ENCODE measurements at regions of chr10 and their contacts with region 1.

Region 1: DNA sequence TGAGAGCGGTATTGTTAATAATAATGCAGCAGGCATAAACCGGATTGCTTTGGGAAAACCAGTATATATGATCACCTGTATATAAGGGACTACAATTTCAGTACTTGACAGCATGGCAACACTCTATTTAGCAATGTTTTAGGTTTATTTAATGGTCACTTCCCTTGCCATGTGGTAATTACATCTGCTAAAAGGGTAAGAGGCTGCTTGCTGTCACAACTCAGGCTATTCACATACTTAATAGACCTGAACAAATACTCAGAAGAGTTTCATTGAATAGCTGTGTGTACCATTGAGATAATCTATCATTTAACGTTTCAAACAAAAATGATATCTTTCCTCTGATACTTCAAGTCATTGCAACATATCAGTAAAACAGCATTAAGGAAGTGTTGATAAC is 90.1 kb downstream of the PCDH15 start:
- DNase-seq: peak in 1 of 2 experiments; percentile 22
- H3K4me3 ChIP-seq: no peak overlapping the region
- H3K4me3 Mint-ChIP-seq: no peak overlapping the region
- H3K27ac Mint-ChIP-seq: no peak overlapping the region
- H3K4me1 ChIP-seq: no peaks in the 10 kb centered on the region
- H3K4me1 Mint-ChIP-seq: no peaks in the 10 kb centered on the region
- H3K27me3 ChIP-seq: no peaks in the 10 kb centered on the region
- H3K27me3 Mint-ChIP-seq: no peaks in the 10 kb centered on the region
- CTCF ChIP-seq: no peak

Region 2: DNA sequence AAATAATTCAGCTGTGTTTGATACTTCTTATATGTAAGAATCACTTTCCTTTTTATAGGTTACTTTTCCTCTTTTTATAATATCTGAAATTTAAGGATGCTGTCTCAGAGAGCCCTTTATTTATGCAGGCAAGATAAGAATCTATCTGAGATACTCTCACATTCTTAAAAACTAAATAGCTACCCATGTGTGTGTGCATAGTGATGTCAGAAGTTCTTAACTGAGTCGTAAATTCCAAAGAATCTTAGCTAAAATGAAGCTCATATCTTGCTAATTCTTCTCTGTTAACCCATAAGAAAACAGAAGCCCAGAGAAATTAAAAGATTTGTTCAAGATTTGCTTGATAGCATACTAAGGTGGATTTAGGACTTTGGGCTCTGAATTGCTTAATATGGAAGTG is 28.4 kb before region 1 on chr10:
- CTCF ChIA-PET with region 1: no interaction called
- POLR2A ChIA-PET with region 1: no interaction called
- intact Hi-C with region 1: loop called (anchors 1 kb)
- DNase-seq: peak in 1 of 2 experiments; percentile 26
- H3K4me3 ChIP-seq: no peak overlapping the region
- H3K4me3 Mint-ChIP-seq: no peak overlapping the region
- H3K27ac Mint-ChIP-seq: no peak overlapping the region
- H3K4me1 ChIP-seq: peaks cover 29% of the 10 kb centered on the region
- H3K4me1 Mint-ChIP-seq: peaks cover 15% of the 10 kb centered on the region
- H3K27me3 ChIP-seq: no peaks in the 10 kb centered on the region
- H3K27me3 Mint-ChIP-seq: no peaks in the 10 kb centered on the region
- CTCF ChIP-seq: no peak

Region 3: DNA sequence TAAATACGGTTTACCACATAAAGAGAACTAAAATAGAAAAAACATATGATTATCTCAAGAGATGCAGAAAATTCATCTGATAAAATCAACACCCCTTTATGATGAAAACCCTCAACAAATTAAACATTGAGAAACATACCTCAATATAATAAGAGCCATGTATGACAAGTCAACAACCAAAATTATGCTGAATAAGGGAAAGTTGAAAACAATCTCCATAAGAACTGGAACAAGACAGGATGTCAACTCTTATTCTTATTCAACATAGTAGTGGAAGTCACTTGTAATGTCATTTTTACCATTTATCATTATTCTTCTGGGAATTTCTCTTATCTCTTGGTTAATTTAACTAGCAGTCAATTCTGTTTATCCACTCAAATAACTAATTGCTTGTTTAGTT is 11.2 kb after region 1 on chr10:
- CTCF ChIA-PET with region 1: no interaction called
- POLR2A ChIA-PET with region 1: no interaction called
- intact Hi-C with region 1: no loop called
- DNase-seq: no peak
- H3K4me3 ChIP-seq: no peak overlapping the region
- H3K4me3 Mint-ChIP-seq: no peak overlapping the region
- H3K27ac Mint-ChIP-seq: no peak overlapping the region
- H3K4me1 ChIP-seq: no peaks in the 10 kb centered on the region
- H3K4me1 Mint-ChIP-seq: no peaks in the 10 kb centered on the region
- H3K27me3 ChIP-seq: no peaks in the 10 kb centered on the region
- H3K27me3 Mint-ChIP-seq: no peaks in the 10 kb centered on the region
- CTCF ChIP-seq: no peak

Measured in Caco-2 (cell line).